Heart left ventricle (tissue), 16 donors: ENCODE measurements at regions of chr11 and their contacts with region 1.

Region 1: GRCh38 chr11:70467201-70468085 is 69.1 kb downstream of the CTTN start:
- DNase-seq: peak in 4 of 5 donors; percentile 49 to 77 (median 55)
- ATAC-seq: peak in 2 of 4 donors; percentile 52 to 56
- H3K4me3 ChIP-seq: no peak overlapping the region
- H3K27ac ChIP-seq: no peak overlapping the region
- H3K4me1 ChIP-seq: peaks cover 0 to 9% (median 1%) of the 10 kb centered on the region in 12 donors
- H3K27me3 ChIP-seq: peaks cover 0 to 1% (median 0%) of the 10 kb centered on the region in 9 donors
- CTCF ChIP-seq: peak; percentile 77 to 99 (median 91)
- POLR2A ChIP-seq: no peak

Region 2: DNA sequence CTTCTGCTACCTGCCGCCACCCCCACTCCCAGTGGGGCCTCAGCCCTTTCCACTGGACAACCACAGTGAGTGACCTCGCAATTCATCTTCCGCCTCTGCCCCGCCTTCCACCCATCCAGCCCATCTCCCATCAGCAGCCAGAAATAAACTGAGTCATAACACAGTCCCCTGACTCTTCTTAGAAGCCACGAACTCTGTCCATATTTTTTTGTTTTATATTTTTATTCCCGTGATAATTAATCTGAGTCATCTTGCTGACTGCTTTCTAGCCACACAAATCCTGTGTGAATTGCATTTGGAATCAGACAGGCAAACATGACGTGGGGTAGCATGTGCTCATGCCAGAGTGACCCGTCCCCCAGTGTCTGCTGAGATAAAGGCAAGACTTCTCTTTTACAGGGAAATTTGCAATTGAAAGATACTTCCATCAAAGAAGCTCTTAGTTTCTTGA is 257.4 kb before region 1 on chr11:
- intact Hi-C with region 1: no loop called
- DNase-seq: no peak
- ATAC-seq: peak in 1 of 4 donors; percentile 58
- H3K4me3 ChIP-seq: no peak overlapping the region
- H3K27ac ChIP-seq: no peak overlapping the region
- H3K4me1 ChIP-seq: peaks cover 0 to 24% (median 9%) of the 10 kb centered on the region in 12 donors
- H3K27me3 ChIP-seq: no peaks in the 10 kb centered on the region
- CTCF ChIP-seq: no peak
- POLR2A ChIP-seq: no peak

Region 3: GRCh38 chr11:70483077-70483861 is 15.8 kb after region 1 on chr11:
- intact Hi-C with region 1: loop called in 3 of 10 experiments (anchors 1 to 2 kb)
- DNase-seq: peak; percentile 33 to 70 (median 52)
- ATAC-seq: peak; percentile 38 to 75 (median 51)
- H3K4me3 ChIP-seq: peak overlapping the region in 2 of 12 donors; percentile 11 to 21
- H3K27ac ChIP-seq: peak overlapping the region; percentile 76 to 94 (median 87)
- H3K4me1 ChIP-seq: peaks cover 0 to 22% (median 0%) of the 10 kb centered on the region in 12 donors
- H3K27me3 ChIP-seq: no peaks in the 10 kb centered on the region
- CTCF ChIP-seq: peak in 11 of 12 donors; percentile 19 to 58 (median 41)
- POLR2A ChIP-seq: no peak

Region 4: GRCh38 chr11:70755410-70756161 is 288.1 kb after region 1 on chr11:
- intact Hi-C with region 1: loop called (anchors 1 to 2 kb)
- DNase-seq: peak; percentile 68 to 84 (median 79)
- ATAC-seq: peak; percentile 91 to 99 (median 96)
- H3K4me3 ChIP-seq: no peak overlapping the region
- H3K27ac ChIP-seq: no peak overlapping the region
- H3K4me1 ChIP-seq: peaks cover 0 to 8% (median 0%) of the 10 kb centered on the region in 12 donors
- H3K27me3 ChIP-seq: peaks cover 0 to 18% (median 3%) of the 10 kb centered on the region in 9 donors
- CTCF ChIP-seq: peak; percentile 87 to 99 (median 94)
- POLR2A ChIP-seq: no peak

Region 5: GRCh38 chr11:71080239-71081097 is 613.0 kb after region 1 on chr11:
- intact Hi-C with region 1: loop called in 1 of 10 experiments (anchors 2 kb)
- DNase-seq: peak in 3 of 5 donors; percentile 29 to 59 (median 56)
- ATAC-seq: peak in 3 of 4 donors; percentile 26 to 67 (median 60)
- H3K4me3 ChIP-seq: no peak overlapping the region
- H3K27ac ChIP-seq: no peak overlapping the region
- H3K4me1 ChIP-seq: no peaks in the 10 kb centered on the region
- H3K27me3 ChIP-seq: peaks cover 0 to 14% (median 0%) of the 10 kb centered on the region in 9 donors
- CTCF ChIP-seq: peak; percentile 24 to 60 (median 48)
- POLR2A ChIP-seq: no peak

Region 6: DNA sequence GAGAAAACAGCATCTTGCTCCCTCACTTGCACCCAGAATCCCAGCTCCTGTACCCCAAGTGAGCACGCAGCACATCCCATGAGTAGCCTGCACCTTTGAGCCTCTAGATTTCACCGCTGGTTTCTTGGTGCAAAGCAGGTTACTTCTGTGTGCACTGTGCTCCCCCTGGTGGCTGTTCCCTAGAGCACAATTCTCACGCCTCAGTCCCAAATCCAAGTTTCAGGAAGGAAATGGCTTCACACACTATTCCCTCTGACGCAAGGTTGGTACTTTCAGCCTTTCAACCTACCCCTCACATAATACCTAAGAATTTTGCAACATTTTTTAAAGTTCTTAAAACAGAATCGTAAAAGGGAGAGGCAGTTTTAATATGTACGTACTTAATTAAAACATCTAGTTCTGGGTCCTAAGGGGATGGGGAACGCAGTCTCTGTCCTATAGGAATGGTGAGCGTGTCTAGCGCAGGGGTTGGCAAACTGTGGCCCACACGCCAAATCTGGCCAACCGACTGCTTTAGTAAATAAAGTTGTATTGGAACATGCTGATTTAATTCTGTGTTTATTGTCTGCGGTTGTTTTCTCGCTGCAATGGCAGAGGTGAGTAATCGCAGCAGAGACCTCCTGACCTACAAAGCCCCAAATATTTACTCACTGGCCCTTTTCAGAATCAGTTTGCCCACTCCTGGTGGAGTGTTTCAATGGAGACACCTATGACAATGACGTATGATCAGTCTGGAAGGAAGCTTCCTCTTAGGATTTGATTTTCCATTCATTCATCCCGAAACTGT is 953.2 kb after region 1 on chr11:
- intact Hi-C with region 1: loop called in 1 of 10 experiments (anchors 5 kb)
- DNase-seq: peak in 1 of 5 donors; percentile 19
- ATAC-seq: peak in 2 of 4 donors; percentile 54 to 64
- H3K4me3 ChIP-seq: no peak overlapping the region
- H3K27ac ChIP-seq: no peak overlapping the region
- H3K4me1 ChIP-seq: no peaks in the 10 kb centered on the region
- H3K27me3 ChIP-seq: peaks cover 0 to 4% (median 0%) of the 10 kb centered on the region in 9 donors
- CTCF ChIP-seq: peak; percentile 30 to 65 (median 48)
- POLR2A ChIP-seq: no peak